CD14-positive monocyte (primary cell): ENCODE measurements at regions of chr1 and their contacts with region 1.

Region 1: DNA sequence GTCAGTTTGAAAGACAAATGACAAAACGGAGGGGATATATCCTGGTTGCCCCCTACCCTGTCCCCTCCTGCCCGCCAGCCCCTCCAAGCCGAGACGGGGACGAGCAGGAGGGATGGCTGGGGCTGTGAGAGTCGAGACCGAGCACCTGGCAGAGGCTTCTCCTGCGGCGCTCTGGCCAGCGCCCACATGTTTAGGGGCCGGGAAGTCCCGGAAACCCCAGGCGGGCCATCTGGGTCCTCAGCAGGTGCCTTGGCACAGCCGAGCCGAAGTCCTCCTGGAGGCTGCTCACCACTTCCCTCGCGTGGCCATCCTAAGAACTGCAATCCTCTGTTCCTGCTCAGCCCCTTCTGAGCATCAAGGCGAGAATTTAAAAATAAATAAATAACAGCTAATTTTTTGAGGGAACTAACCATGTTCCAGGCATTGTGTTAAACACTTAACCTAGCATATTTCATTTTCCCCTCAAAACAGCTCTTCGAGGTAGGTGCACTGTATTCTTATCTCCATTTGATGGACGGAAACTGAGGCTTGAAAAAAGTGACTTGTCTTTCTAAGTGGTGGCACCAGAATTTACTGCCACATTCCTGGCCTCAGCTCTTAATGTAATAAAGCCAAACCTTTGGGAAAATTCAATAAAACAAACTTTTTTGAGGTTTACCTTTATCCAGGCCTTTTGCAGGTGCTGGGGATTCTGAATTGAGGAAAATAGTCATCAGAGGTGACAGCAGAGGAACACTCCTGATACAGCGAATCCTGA is 3.5 kb upstream of the RIMS3 start:
- DNase-seq: peak; percentile 63 to 79 (median 79)
- H3K4me3 ChIP-seq: peak overlapping the region in 1 of 3 experiments; percentile 51
- H3K4me3 Mint-ChIP-seq: peak overlapping the region; percentile 39 to 46
- H3K27ac ChIP-seq: no peak overlapping the region
- H3K27ac Mint-ChIP-seq: no peak overlapping the region
- H3K4me1 ChIP-seq: peaks cover 14 to 24% of the 10 kb centered on the region in 2 donors
- H3K4me1 Mint-ChIP-seq: peaks cover 16% of the 10 kb centered on the region
- H3K27me3 ChIP-seq: peaks cover 0 to 10% of the 10 kb centered on the region in 2 donors
- H3K27me3 Mint-ChIP-seq: peaks cover 5 to 15% (median 15%) of the 10 kb centered on the region in 3 donors
- CTCF ChIP-seq: peak; percentile 97

Region 2: DNA sequence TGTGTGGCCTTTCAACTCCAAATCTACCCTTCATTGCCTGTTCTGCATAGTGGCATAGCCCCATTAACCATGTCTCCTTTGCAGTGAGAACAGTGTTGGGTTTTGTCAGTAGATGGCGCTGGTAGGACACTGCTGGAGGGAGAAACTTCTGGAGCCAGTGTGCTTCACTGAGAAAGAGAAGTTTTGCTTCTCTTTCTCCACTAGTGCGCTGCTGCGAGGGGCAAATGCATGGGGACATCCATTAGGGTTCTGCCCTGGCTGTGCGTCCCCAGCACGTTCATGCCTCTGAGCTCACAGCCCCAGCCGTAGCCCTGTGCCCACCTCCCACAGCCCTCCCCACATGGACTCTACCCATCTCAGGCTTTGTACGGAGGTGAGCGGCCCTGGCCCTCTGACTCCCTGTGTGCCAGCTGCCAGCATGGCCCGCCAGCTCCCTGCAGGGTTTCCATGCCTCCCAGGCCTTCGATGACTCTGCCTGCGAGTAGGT is 56.6 kb before region 1 on chr1:
- intact Hi-C with region 1: loop called in 1 of 2 experiments (anchors 5 kb)
- DNase-seq: peak; percentile 44 to 60 (median 58)
- H3K4me3 ChIP-seq: no peak overlapping the region
- H3K4me3 Mint-ChIP-seq: no peak overlapping the region
- H3K27ac ChIP-seq: no peak overlapping the region
- H3K27ac Mint-ChIP-seq: no peak overlapping the region
- H3K4me1 ChIP-seq: peaks cover 6 to 14% of the 10 kb centered on the region in 2 donors
- H3K4me1 Mint-ChIP-seq: peaks cover 12% of the 10 kb centered on the region
- H3K27me3 ChIP-seq: no peaks in the 10 kb centered on the region
- H3K27me3 Mint-ChIP-seq: peaks cover 2 to 4% (median 2%) of the 10 kb centered on the region in 3 donors
- CTCF ChIP-seq: peak; percentile 89